ENCODE measurements at regions of chr6 and their contacts with region 1.

Region 1: GRCh38 chr6:44338228-44339122 is 4.0 kb upstream of the SPATS1 start:
- DNase-seq: peak; percentile 77
- H3K4me3 Mint-ChIP-seq: no peak overlapping the region
- H3K27ac Mint-ChIP-seq: no peak overlapping the region
- H3K4me1 Mint-ChIP-seq: no peaks in the 10 kb centered on the region
- H3K27me3 Mint-ChIP-seq: peaks cover 65% of the 10 kb centered on the region
- CTCF ChIP-seq: peak; percentile 84

Region 2: DNA sequence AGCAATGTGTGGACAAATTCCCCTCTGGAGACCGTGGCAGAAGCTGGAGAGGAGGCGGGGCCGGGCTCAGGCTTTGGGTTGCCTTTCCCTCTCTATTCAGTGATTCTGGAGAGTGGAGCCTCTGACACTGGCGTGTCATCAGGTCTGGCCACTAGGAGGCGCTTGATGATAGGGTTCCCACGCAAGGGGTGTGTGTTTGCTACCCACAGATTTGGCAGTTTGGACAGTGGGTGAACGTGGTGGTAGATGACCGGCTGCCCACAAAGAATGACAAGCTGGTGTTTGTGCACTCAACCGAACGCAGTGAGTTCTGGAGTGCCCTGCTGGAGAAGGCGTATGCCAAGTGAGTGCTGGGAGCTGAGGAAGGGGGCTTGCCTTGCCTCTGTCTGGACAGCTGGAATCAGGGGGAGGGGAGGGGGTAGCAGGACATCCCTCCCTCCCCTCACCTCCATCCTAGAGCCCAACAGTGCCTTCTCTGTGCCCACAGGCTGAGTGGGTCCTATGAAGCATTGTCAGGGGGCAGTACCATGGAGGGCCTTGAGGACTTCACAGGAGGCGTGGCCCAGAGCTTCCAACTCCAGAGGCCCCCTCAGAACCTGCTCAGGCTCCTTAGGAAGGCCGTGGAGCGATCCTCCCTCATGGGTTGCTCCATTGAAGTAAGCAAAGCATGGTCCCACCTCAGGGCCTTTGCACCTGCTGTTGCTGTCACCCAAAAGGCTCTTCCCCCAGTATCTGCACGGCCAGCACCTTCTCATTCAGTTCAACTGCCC is 165.6 kb before region 1 on chr6:
- CTCF ChIA-PET with region 1: interaction called, 3 read pairs
- intact Hi-C with region 1: loop called (anchors 1 kb)
- DNase-seq: peak; percentile 90
- H3K4me3 Mint-ChIP-seq: no peak overlapping the region
- H3K27ac Mint-ChIP-seq: no peak overlapping the region
- H3K4me1 Mint-ChIP-seq: peaks cover 11% of the 10 kb centered on the region
- H3K27me3 Mint-ChIP-seq: peaks cover 50% of the 10 kb centered on the region
- CTCF ChIP-seq: peak; percentile 95

Region 3: DNA sequence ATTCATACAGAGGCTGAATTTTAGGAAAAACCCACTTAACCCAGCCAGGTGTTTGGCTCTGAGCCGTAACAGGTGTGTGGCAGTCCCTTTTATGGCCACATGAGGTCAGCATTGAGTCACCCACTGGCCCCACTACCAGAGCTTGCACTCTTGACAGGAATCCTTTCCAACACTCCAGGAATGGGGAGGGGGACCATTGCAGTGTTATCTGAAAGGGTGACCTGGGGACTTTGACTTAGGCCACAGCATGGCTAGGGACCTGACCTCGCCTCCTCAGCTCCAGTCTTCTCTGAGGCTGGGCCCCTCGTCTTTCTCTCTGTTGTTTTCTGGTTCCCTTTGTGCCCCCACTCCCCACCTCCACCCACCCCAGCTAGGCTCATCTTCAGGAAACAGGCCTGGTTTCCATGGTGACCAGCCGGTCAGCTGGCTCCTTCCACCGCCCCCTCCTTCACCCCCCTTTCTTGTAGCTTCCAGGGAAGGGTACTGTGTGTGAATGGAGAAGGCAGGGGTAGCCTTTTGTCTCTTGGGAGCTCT is 70.3 kb before region 1 on chr6:
- CTCF ChIA-PET with region 1: interaction called, 53 read pairs
- intact Hi-C with region 1: loop called (anchors 1 kb)
- DNase-seq: peak; percentile 77
- H3K4me3 Mint-ChIP-seq: no peak overlapping the region
- H3K27ac Mint-ChIP-seq: no peak overlapping the region
- H3K4me1 Mint-ChIP-seq: peaks cover 16% of the 10 kb centered on the region
- H3K27me3 Mint-ChIP-seq: peaks cover 71% of the 10 kb centered on the region
- CTCF ChIP-seq: peak; percentile 88

Measured in Calu3 (cell line).